Testis (tissue), 5 donors: ENCODE measurements at regions of chr17 and their contacts with region 1.

Region 1: GRCh38 chr17:48037036-48037837 is at the start of gene COPZ2:
- DNase-seq: peak; percentile 73
- H3K4me3 ChIP-seq: peak within 1 kb of the TSS; percentile 61 to 74
- H3K27ac ChIP-seq: peak within 1 kb of the TSS; percentile 23 to 33
- H3K4me1 ChIP-seq: peaks cover 9% of the 10 kb centered on the region
- H3K27me3 ChIP-seq: no peaks in the 10 kb centered on the region
- CTCF ChIP-seq: peak in 1 of 3 experiments; percentile 48
- POLR2A ChIP-seq: no peak
- total RNA-seq, gene COPZ2: 13.2 to 14.7 TPM

Region 2: DNA sequence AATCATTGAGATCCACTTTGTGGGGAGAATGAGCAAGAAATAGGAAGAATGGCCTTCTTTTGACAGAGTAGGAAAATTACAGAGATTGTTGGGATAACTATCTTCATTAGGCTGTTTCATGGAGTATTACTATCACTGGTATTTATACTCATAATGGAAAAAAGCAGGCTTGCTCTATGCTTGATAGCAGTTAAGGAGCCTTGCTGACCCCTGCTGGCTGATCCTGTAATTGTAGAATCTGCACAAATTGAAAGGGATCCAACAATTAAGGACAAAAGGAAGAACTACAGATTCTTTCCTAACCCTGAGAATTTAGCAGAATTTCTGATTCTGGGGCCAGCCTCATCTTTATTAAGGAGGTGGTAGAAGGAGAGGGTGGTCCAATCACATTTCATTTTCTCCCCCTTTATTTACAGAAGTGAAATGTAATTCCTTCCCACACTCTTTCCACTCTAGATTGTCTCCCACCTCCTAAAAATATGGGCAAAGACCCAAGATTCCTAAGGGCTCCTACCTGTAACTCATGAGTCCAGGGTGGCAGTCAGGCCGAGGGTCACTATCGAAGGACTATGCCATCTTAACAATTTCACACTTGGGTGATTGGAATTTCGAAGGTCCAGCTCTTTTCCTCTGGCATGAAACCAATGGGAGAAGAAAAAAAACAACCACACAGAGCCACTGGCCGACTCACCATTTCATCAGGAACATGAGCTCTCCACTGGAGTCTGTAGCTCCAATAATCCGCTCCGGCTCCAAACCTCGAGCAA is 37.3 kb after region 1 on chr17:
- intact Hi-C with region 1: loop called (anchors 5 kb)
- DNase-seq: peak; percentile 92
- H3K4me3 ChIP-seq: no peak overlapping the region
- H3K27ac ChIP-seq: no peak overlapping the region
- H3K4me1 ChIP-seq: peaks cover 3% of the 10 kb centered on the region
- H3K27me3 ChIP-seq: no peaks in the 10 kb centered on the region
- CTCF ChIP-seq: peak; percentile 74 to 90 (median 83)
- POLR2A ChIP-seq: no peak

Region 3: GRCh38 chr17:48100591-48101011 is 63.4 kb after region 1 on chr17:
- intact Hi-C with region 1: no loop called
- DNase-seq: peak; percentile 78
- H3K4me3 ChIP-seq: peak overlapping the region; percentile 77 to 87
- H3K27ac ChIP-seq: peak overlapping the region; percentile 60 to 88
- H3K4me1 ChIP-seq: peaks cover 4% of the 10 kb centered on the region
- H3K27me3 ChIP-seq: no peaks in the 10 kb centered on the region
- CTCF ChIP-seq: no peak
- POLR2A ChIP-seq: no peak